ENCODE measurements at regions of chr7 and their contacts with region 1.

Region 1: GRCh38 chr7:70259502-70259901 is 661.2 kb downstream of the AUTS2 start:
- DNase-seq: no peak
- ATAC-seq: peak; percentile 65 to 93

Region 2: DNA sequence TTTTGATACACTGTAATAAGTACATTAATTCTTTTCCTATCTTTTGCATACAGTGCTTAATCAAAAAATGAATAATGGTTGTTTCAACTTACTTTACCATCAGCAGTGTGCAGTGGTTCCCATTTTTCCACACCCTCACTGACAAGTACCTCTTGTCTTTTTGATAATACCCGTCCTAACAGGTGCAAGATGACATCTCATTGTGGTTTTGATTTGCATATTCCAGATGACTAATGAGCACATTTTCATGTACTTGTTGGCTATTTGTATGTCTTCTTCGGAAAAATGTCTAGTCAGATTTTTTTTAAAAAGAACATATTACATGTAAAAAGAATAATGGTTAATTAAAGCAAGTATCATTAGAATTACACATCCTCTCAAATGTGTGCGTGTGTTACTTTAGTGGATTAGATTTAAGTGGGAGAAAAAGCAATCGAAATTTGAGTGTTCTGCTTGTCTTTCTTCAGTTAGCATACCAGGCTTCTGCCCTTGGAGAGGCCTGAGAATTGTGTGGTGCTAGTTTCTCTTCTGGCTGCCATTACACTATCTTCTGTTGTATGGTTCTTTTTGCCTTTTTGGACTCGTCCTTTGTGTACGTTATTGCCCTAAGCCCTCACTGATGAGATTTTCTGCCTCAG is 370.0 kb before region 1 on chr7:
- intact Hi-C with region 1: no loop called
- DNase-seq: no peak
- ATAC-seq: no peak

Region 3: GRCh38 chr7:69922026-69922803 is 337.3 kb before region 1 on chr7:
- intact Hi-C with region 1: no loop called
- DNase-seq: no peak
- ATAC-seq: no peak

Region 4: GRCh38 chr7:70215491-70215890 is 44.0 kb before region 1 on chr7:
- intact Hi-C with region 1: loop called in 1 of 2 experiments (anchors 2 kb)
- DNase-seq: no peak
- ATAC-seq: peak in 1 of 2 donors; percentile 44

Measured in left cardiac atrium (tissue), 4 donors.